SK-N-SH (cell line): ENCODE measurements at regions of chr2 and their contacts with region 1.

Region 1: GRCh38 chr2:21431078-21431477 is 307.3 kb downstream of the TDRD15 start:
- DNase-seq: peak; percentile 85
- H3K4me3 ChIP-seq: no peak overlapping the region
- H3K27ac ChIP-seq: peak overlapping the region in 1 of 2 experiments; percentile 98; a peak in 2 of 4 replicates
- H3K4me1 ChIP-seq: peaks cover 0 to 16% of the 10 kb centered on the region in 2 experiments; a peak in 2 of 4 replicates
- H3K27me3 ChIP-seq: no peaks in the 10 kb centered on the region
- CTCF ChIP-seq: no peak
- EP300 ChIP-seq: peak in 1 of 2 experiments; percentile 99; a peak in 2 of 4 replicates
- RAD21 ChIP-seq: peak; percentile 43

Region 2: DNA sequence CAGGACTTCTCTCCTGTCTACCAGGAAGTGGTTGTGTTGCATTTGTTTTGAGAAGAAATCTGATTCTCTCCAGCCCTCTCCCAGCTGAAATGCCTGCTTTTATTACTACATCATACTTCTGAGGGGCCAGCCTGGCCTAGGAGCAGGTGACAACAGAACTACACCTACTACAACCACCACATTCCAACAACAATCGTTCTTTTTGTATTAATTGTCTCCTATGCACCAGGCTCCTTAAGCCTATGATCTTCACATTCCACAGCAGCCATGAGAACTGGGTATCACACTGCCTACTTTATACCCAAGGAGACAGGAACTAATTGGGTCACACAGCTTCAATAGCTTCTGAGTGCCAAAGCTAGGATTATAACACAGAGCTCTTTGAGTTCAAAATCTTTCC is 139.7 kb before region 1 on chr2:
- CTCF ChIA-PET with region 1: no interaction called
- POLR2A ChIA-PET with region 1: no interaction called
- DNase-seq: no peak
- H3K4me3 ChIP-seq: no peak overlapping the region
- H3K27ac ChIP-seq: no peak overlapping the region
- H3K4me1 ChIP-seq: peaks cover 0 to 30% of the 10 kb centered on the region in 2 experiments; a peak in 2 of 4 replicates
- H3K27me3 ChIP-seq: no peaks in the 10 kb centered on the region
- CTCF ChIP-seq: no peak
- EP300 ChIP-seq: no peak
- RAD21 ChIP-seq: no peak

Region 3: DNA sequence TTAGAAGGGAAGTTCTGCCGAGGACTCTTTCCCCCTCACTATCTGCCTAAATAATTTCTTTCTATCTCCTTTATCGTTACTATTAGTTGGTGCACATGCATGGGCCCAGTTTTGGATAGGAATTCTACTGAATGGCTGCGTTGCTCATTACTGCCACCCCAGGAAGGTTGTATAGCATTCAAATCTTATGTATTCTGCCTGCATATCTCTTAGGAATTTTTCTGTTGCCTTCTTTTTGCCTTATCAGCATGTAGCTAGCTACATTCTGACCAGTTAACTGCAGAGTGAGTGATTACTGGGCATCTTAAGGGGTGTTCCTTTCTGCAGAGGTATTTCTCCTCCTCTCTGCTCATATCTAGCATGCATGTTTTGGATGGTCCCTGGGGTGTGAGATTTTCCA is 67.7 kb before region 1 on chr2:
- CTCF ChIA-PET with region 1: no interaction called
- POLR2A ChIA-PET with region 1: no interaction called
- DNase-seq: no peak
- H3K4me3 ChIP-seq: no peak overlapping the region
- H3K27ac ChIP-seq: no peak overlapping the region
- H3K4me1 ChIP-seq: no peaks in the 10 kb centered on the region; a peak in 1 of 4 replicates
- H3K27me3 ChIP-seq: no peaks in the 10 kb centered on the region
- CTCF ChIP-seq: no peak
- EP300 ChIP-seq: no peak
- RAD21 ChIP-seq: no peak

Region 4: DNA sequence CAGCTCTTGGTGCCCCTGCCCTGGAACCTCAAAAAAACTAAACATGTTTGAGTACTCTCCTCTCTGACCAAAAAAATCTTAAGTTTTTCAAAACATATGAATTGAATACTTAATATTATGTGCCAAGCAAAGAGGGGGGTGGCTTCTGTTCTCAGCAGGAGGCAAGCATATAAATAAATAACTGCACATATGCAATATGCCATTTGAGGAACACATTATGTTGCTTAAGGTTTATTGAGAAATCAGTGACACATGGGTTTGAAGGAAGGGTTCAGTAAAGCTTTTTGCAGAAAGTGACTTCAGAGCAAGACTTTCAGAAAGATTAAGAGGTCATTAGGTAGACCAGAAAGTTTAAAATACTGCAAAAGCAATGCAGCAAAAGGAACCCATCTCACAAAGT is 121.9 kb after region 1 on chr2:
- CTCF ChIA-PET with region 1: no interaction called
- POLR2A ChIA-PET with region 1: no interaction called
- DNase-seq: no peak
- H3K4me3 ChIP-seq: no peak overlapping the region
- H3K27ac ChIP-seq: no peak overlapping the region
- H3K4me1 ChIP-seq: no peaks in the 10 kb centered on the region
- H3K27me3 ChIP-seq: no peaks in the 10 kb centered on the region
- CTCF ChIP-seq: no peak
- EP300 ChIP-seq: no peak
- RAD21 ChIP-seq: no peak

Region 5: DNA sequence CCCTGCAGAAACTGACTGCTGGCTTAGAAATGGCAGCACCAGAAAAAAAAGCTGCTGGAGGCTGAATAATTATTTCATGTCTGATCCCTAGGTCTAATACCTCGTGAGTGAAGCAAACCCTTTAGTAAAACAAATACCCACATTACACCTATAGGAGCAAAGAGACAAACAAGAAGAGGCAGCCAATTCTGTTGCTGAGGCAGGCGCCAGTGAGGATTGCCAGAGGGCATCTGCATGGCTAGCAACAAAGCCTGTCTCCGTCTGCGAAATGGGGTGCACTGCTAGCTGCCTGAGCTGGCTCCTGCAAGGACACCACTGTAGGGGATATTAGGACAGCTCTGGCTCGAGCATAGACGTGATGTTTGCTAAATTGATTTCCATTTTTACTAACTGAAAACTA is 202.4 kb after region 1 on chr2:
- CTCF ChIA-PET with region 1: no interaction called
- POLR2A ChIA-PET with region 1: interaction called, 13 read pairs
- DNase-seq: peak; percentile 73
- H3K4me3 ChIP-seq: no peak overlapping the region; a peak in 1 of 4 replicates
- H3K27ac ChIP-seq: peak overlapping the region in 1 of 2 experiments; percentile 99; a peak in 3 of 4 replicates
- H3K4me1 ChIP-seq: peaks cover 0 to 13% of the 10 kb centered on the region in 2 experiments; a peak in 2 of 4 replicates
- H3K27me3 ChIP-seq: no peaks in the 10 kb centered on the region
- CTCF ChIP-seq: no peak
- EP300 ChIP-seq: no peak; a peak in 1 of 4 replicates
- RAD21 ChIP-seq: no peak; the same call in 1 of the 2 replicates